H1 (cell line): ENCODE measurements at regions of chr12 and their contacts with region 1.

Region 1: DNA sequence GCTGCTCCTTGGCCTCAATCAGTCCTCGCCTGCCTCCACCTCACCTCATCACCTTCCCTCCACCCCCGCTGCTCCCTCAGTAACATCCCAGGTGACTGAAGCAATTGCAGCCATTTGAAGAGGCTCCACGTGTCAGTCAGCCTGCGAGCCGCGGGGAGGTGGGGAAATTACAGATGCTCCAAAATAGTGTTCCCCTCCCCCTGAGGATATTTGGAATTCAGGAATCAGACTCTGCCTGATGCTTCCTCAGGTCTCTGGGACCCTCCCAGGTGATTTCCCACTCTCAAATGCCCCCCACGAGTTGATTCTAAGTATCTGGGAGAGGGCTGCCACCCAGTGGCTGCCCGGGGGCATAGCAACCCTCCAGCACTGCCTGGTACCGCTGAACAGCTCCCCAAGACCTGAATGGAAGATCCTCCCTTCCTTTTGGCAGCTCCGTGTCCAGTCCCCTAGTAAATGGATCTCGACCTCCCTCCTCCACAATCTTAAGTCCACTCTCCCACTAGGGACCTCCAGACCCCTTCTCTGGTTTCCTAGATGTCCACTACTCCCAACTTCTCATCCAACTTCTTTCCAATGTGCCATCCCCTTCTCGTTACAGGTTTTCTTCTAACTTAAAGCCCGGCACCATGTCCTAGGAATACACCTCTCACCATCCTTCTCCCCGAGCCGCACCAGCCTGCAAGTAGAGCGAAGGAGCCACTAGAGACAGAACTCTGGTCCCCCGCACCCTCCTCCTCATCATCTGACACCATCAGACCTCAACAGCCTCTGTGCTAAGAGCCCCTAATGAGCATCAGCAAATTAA is 1.4 kb upstream of the ASIC1 start:
- DNase-seq: peak in 1 of 2 experiments; percentile 82
- H3K4me3 ChIP-seq: peak overlapping the region in 2 of 4 experiments; percentile 17 to 74; a peak in 5 of 8 replicates
- H3K27ac ChIP-seq: no peak overlapping the region
- H3K4me1 ChIP-seq: peaks cover 3 to 16% (median 10%) of the 10 kb centered on the region in 4 experiments
- H3K27me3 ChIP-seq: peaks cover 35 to 91% (median 73%) of the 10 kb centered on the region in 4 experiments
- CTCF ChIP-seq: peak; percentile 90 to 96 (median 91)
- EP300 ChIP-seq: no peak
- POLR2A ChIP-seq: no peak
- RAD21 ChIP-seq: peak; percentile 89 to 92

Region 2: DNA sequence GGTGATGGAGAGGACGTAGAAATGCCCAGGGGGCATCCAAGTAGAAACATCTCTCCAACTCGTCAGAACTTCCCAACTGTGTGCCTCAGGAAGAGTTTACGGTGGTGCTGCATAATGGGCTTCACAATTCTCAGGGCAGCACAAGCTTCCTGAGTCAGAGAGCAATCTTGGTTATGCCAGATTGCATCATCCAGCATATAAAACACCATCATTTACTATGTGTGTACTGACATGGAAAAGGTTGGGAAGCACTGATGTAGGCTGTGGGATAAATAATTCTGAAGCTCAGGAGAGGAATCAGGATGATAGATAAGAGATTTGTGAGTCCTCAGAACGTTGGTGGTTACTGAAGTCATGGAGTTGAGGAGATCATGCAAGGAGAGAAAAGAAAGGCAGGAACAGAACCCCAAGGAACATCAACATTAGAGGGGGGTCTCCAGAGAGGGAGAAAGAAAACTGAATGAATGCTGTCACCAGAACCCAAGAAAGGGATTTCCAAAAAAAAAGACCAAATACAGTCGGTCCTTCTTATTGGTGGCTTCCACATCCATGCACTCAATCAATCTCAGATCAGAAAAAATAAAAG is 223.1 kb before region 1 on chr12:
- CTCF ChIA-PET with region 1: no interaction called
- POLR2A ChIA-PET with region 1: no interaction called
- DNase-seq: no peak
- H3K4me3 ChIP-seq: no peak overlapping the region
- H3K27ac ChIP-seq: no peak overlapping the region
- H3K4me1 ChIP-seq: peaks cover 0 to 7% (median under 1%) of the 10 kb centered on the region in 4 experiments; a peak in 3 of 7 replicates
- H3K27me3 ChIP-seq: no peaks in the 10 kb centered on the region
- CTCF ChIP-seq: no peak
- EP300 ChIP-seq: no peak
- POLR2A ChIP-seq: no peak
- RAD21 ChIP-seq: no peak

Region 3: DNA sequence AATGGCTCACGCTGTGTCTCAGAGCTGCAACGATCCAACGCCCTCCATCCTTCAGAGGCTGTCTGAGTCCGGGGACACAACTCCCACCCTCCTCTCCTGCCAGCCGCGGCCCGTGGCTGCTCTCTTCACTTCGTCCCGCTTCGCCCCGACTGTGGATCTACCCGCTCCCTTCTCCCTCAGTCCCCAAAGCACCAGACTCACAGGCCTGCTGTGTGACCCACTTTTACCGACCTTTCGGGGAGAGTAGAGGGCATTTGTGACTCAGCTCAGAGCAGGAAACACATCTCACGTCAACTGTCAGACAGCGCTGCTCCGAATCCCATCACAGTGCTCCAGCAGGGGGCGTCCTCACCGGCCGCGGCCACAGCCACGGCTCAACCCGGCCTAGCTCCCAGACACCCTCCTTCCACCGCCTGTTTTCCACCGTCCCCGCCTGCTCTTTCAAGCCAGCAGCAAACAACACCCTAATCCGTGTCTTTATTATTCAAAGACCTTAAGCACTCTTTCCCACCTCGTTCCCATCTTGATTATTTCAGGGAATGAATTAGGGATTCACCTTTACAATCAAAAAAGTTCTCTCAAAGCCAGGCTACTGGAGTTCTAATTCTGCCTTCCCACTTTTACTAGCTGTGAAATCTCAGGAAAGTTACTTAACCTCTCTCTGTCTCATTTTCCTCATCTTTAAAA is 110.5 kb before region 1 on chr12:
- CTCF ChIA-PET with region 1: interaction called, 15 read pairs
- POLR2A ChIA-PET with region 1: no interaction called
- DNase-seq: peak; percentile 77 to 97
- H3K4me3 ChIP-seq: peak overlapping the region in 2 of 4 experiments; percentile 16 to 44; a peak in 4 of 8 replicates
- H3K27ac ChIP-seq: no peak overlapping the region
- H3K4me1 ChIP-seq: peaks cover 3 to 17% (median 4%) of the 10 kb centered on the region in 4 experiments; a peak in 6 of 7 replicates
- H3K27me3 ChIP-seq: peaks cover 0 to 3% (median 0%) of the 10 kb centered on the region in 4 experiments; a peak in 1 of 7 replicates
- CTCF ChIP-seq: peak; percentile 87 to 95 (median 89)
- EP300 ChIP-seq: no peak
- POLR2A ChIP-seq: no peak
- RAD21 ChIP-seq: peak; percentile 54 to 64

Region 4: DNA sequence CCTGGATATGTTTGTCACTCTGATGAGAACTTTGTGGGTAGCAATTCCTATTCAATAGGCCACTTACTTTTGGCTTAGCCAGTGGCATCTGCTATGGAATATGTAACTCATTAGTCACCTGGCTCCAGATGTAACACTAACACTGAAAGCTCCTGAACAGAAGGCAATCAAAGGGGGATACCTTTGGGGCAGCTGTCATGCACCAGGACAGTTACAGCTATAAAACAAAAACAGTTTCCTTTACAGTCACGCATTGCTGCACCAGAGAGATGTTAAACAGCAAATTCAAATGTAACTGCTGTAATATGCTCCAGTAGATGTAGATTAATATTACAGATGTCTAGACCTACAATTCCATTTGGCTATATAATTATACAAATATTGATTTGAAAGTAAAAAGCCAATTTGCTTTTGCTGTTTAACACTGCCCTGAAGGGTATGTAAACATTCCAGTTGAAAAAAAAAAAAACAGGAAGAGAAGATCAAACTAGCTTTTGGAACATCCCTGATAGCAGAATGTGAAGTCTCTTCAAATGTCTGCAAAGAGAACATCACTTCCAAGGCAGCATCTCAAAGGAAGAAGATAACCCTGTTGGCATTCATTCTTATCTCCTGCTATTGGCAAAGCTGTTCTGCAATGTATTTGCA is 49.1 kb before region 1 on chr12:
- CTCF ChIA-PET with region 1: interaction called, 18 read pairs
- POLR2A ChIA-PET with region 1: no interaction called
- DNase-seq: no peak
- H3K4me3 ChIP-seq: no peak overlapping the region
- H3K27ac ChIP-seq: no peak overlapping the region
- H3K4me1 ChIP-seq: no peaks in the 10 kb centered on the region
- H3K27me3 ChIP-seq: no peaks in the 10 kb centered on the region
- CTCF ChIP-seq: no peak
- EP300 ChIP-seq: no peak
- POLR2A ChIP-seq: no peak
- RAD21 ChIP-seq: no peak

Region 5: GRCh38 chr12:50025187-50026059 is 30.6 kb before region 1 on chr12 and contains the start of gene RACGAP1:
- CTCF ChIA-PET with region 1: interaction called, 20 read pairs
- POLR2A ChIA-PET with region 1: interaction called, 3 read pairs
- DNase-seq: peak; percentile 90 to 94
- H3K4me3 ChIP-seq: peak within 1 kb of the TSS; percentile 81 to 86 (median 82)
- H3K27ac ChIP-seq: no peak within 1 kb of the TSS
- H3K4me1 ChIP-seq: no peaks in the 10 kb centered on the region
- H3K27me3 ChIP-seq: no peaks in the 10 kb centered on the region
- CTCF ChIP-seq: no peak
- EP300 ChIP-seq: no peak
- POLR2A ChIP-seq: no peak; a peak in 1 of 3 replicates
- RAD21 ChIP-seq: no peak
- total RNA-seq, gene RACGAP1: 63.5 and 66.3 TPM in 2 replicates

Region 6: GRCh38 chr12:50043854-50044253 is 12.2 kb before region 1 on chr12:
- CTCF ChIA-PET with region 1: interaction called, 296 read pairs
- POLR2A ChIA-PET with region 1: interaction called, 19 read pairs
- DNase-seq: no peak
- H3K4me3 ChIP-seq: no peak overlapping the region
- H3K27ac ChIP-seq: no peak overlapping the region
- H3K4me1 ChIP-seq: no peaks in the 10 kb centered on the region
- H3K27me3 ChIP-seq: peaks cover 0 to 5% (median under 1%) of the 10 kb centered on the region in 4 experiments; a peak in 3 of 7 replicates
- CTCF ChIP-seq: no peak
- EP300 ChIP-seq: no peak
- POLR2A ChIP-seq: no peak
- RAD21 ChIP-seq: no peak